Activated CD4-positive, alpha-beta T cell treated with anti-CD3 and anti-CD28 coated beads for 36 hours (primary cell): ENCODE measurements at regions of chr16 and their contacts with region 1.

Region 1: DNA sequence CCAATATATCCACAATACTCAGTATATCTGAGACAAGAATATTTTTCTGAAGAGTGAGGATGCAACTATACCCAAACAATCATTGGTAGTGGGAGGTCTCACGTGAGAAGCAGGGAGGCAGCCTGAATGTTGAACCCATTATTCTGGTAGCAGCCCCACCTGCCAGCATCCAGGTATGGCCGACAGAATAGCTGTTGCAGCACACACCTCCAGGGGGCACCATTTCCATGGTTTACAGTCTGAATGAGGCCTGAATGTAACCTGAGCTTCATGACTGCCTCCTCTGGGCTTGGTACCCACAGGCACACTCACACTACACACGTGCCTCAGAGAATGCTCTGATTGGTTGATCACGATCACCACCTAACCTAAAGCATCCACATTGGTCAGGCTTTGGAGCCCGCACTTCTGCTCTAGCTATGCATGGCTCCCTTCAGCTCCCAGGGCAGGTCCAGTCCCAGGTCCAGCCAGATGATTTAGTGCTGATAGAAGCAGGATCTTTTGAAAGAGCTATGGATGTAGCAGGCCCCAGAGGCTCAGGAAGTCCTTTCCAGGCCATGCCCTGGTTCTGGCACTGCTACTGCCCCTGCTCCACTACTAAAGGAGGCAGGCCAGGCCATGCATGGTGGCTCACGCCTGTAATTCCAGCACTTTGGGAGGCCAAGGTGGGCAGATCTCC is 11.0 kb upstream of the CBFB start:
- DNase-seq: peak; percentile 95
- ATAC-seq: peak; percentile 97
- H3K4me3 Mint-ChIP-seq: no peak overlapping the region
- H3K27ac Mint-ChIP-seq: no peak overlapping the region
- H3K4me1 Mint-ChIP-seq: peaks cover 17% of the 10 kb centered on the region
- H3K27me3 Mint-ChIP-seq: peaks cover 2% of the 10 kb centered on the region

Region 2: DNA sequence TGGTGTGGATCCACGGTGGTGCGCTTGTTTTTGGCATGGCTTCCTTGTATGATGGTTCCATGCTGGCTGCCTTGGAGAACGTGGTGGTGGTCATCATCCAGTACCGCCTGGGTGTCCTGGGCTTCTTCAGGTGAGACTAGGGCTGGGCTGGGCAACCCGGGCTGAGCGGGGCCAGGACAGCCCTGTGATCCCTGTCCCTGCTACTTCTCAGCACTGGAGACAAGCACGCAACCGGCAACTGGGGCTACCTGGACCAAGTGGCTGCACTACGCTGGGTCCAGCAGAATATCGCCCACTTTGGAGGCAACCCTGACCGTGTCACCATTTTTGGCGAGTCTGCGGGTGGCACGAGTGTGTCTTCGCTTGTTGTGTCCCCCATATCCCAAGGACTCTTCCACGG is 77.7 kb before region 1 on chr16:
- CTCF ChIA-PET with region 1: no interaction called
- POLR2A ChIA-PET with region 1: no interaction called
- intact Hi-C with region 1: no loop called
- DNase-seq: no peak
- ATAC-seq: no peak
- H3K4me3 Mint-ChIP-seq: no peak overlapping the region
- H3K27ac Mint-ChIP-seq: no peak overlapping the region
- H3K4me1 Mint-ChIP-seq: peaks cover 27% of the 10 kb centered on the region
- H3K27me3 Mint-ChIP-seq: no peaks in the 10 kb centered on the region

Region 3: DNA sequence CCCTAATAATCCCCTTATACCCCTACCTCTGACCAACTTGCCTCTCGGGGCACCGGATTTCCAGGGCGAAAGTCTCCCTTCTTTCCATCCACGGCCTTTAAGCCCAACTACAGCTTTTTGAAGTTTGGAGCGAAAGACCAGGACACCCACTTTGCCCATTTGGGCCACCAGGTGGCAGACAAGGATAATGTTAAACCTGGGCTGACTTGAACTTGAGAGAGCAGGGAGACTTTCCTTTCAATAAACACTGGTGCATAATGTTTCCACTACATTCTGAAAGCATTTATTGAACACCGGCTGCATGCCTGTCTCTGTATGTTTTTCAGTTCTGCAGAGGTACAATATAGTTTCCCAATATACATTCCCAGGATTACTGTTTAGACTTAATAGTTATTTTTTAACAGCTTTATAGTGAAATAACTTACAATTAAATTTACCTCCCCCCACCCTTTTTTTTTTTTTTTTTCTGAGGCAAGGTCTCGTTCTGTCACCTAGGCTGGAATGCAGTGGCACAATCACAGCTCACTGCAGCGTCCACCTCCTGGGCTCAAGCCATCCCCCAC is 63.8 kb before region 1 on chr16:
- CTCF ChIA-PET with region 1: interaction called, 14 read pairs
- POLR2A ChIA-PET with region 1: no interaction called
- intact Hi-C with region 1: loop called in 1 of 2 experiments (anchors 1 kb)
- DNase-seq: peak; percentile 87
- ATAC-seq: peak; percentile 85
- H3K4me3 Mint-ChIP-seq: no peak overlapping the region
- H3K27ac Mint-ChIP-seq: no peak overlapping the region
- H3K4me1 Mint-ChIP-seq: peaks cover 9% of the 10 kb centered on the region
- H3K27me3 Mint-ChIP-seq: peaks cover 28% of the 10 kb centered on the region

Region 4: DNA sequence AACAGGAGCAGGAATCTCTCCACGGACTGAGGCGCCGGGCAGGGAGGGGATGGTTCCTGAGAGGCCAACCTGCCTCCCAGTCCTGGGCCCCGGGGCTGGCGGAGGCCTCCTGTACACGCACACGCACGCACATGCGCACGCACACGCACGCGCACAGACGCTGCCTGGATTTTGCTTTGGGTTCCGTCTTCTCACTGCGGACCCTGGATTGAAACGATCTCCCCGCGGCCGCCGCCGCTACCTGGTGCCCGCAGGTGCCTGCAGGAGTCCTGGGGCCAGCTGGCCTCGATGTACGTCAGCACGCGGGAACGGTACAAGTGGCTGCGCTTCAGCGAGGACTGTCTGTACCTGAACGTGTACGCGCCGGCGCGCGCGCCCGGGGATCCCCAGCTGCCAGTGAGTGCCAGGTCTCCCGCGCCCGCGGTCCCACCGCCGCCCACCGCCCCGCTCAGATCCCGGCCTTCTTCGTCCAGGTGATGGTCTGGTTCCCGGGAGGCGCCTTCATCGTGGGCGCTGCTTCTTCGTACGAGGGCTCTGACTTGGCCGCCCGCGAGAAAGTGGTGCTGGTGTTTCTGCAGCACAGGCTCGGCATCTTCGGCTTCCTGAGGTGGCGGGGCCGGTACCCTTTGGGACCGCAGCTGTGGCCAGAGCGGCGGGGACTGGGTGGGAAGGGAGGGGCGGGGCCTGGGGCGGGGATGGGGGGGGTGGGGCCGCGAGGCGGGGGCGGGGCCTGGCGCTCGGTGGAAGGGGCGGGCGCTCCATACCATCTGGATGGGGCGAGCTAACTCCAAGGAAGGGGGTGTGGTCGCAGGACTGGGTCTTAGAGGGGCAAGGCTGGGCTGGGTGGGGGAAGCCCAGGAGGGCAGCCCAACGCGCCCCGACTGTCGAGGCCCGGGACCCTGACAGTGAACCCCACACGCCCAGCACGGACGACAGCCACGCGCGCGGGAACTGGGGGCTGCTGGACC is 17.3 kb before region 1 on chr16:
- CTCF ChIA-PET with region 1: interaction called, 5 read pairs
- POLR2A ChIA-PET with region 1: interaction called, 3 read pairs
- intact Hi-C with region 1: loop called in 1 of 2 experiments (anchors 1 kb)
- DNase-seq: peak; percentile 79
- ATAC-seq: peak; percentile 80
- H3K4me3 Mint-ChIP-seq: peak overlapping the region; percentile 74
- H3K27ac Mint-ChIP-seq: peak overlapping the region; percentile 87
- H3K4me1 Mint-ChIP-seq: peaks cover 15% of the 10 kb centered on the region
- H3K27me3 Mint-ChIP-seq: no peaks in the 10 kb centered on the region

Region 5: DNA sequence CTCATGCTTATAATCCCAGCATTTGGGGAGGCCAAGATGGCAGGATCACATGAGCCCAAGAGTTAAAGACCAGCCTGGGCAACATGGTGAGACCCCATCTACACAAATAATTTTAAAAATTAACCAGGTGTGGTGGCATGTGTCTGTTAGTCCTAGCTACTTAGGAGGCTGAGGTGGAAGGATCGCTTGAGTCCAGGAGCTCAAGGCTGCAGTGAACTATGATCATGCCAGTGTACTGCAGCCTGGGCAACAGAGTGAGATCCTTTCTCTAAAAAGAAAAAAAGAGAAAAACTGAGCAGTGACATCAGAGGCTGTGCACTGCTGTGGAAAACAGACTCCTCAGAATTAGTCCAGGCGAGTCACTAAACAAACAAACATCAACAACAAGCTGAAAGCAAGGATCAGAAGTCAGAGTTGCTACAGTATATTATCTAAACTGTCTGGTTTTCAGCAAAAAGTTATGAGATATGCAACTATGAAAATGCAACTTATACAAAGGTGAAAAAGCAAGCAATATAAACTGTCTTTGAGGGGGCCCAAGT is 50.3 kb after region 1 on chr16:
- CTCF ChIA-PET with region 1: interaction called, 12 read pairs
- POLR2A ChIA-PET with region 1: no interaction called
- intact Hi-C with region 1: no loop called
- DNase-seq: no peak
- ATAC-seq: no peak
- H3K4me3 Mint-ChIP-seq: no peak overlapping the region
- H3K27ac Mint-ChIP-seq: no peak overlapping the region
- H3K4me1 Mint-ChIP-seq: peaks cover 3% of the 10 kb centered on the region
- H3K27me3 Mint-ChIP-seq: no peaks in the 10 kb centered on the region

Region 6: GRCh38 chr16:67129422-67129821 is 111.5 kb after region 1 on chr16:
- CTCF ChIA-PET with region 1: interaction called, 10 read pairs
- POLR2A ChIA-PET with region 1: no interaction called
- intact Hi-C with region 1: no loop called
- DNase-seq: no peak
- ATAC-seq: no peak
- H3K4me3 Mint-ChIP-seq: no peak overlapping the region
- H3K27ac Mint-ChIP-seq: no peak overlapping the region
- H3K4me1 Mint-ChIP-seq: no peaks in the 10 kb centered on the region
- H3K27me3 Mint-ChIP-seq: no peaks in the 10 kb centered on the region

Region 7: DNA sequence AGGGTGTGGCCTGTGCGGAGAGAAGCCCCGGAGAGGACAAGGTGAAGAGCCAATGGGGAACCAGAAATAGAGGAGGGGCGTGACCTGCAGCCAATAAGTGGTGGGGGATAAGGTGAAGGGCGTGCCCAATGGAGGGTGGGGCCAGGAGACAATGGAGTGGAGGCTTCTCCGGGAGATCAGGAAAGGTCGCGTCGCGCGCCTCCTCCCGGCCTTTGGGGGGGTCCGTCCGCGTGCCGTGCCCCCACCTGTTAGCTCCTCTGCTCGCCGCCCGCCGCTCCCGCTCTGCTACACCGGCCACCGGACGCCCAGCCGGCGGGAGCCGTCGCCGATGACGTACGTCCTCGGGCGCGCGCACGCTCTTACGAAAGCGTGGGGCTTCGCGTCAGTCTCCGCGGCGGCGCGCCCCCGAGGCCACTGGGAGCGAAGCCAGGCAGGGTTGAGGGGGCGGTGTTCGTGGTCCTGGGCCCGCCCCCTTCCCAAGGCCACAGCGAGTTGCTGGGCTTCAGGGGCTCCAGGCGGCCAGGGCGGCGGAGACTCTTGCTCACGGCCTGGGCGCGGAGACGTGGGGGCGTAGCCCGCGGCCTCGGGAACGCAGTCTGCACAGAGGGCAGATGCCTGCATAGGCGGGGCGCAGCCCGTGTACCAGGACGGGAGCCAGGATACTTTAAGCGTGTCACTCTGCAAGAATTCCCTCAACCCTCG is 165.8 kb after region 1 on chr16 and contains the start of gene MATCAP1:
- CTCF ChIA-PET with region 1: interaction called, 18 read pairs
- POLR2A ChIA-PET with region 1: interaction called, 4 read pairs
- intact Hi-C with region 1: loop called in 1 of 2 experiments (anchors 1 kb)
- DNase-seq: peak; percentile 96
- ATAC-seq: peak; percentile 97
- H3K4me3 Mint-ChIP-seq: no peak within 1 kb of the TSS
- H3K27ac Mint-ChIP-seq: no peak within 1 kb of the TSS
- H3K4me1 Mint-ChIP-seq: peaks cover 15% of the 10 kb centered on the region
- H3K27me3 Mint-ChIP-seq: peaks cover 9% of the 10 kb centered on the region
- total RNA-seq, gene MATCAP1: 28.8 to 30.4 TPM

Region 8: DNA sequence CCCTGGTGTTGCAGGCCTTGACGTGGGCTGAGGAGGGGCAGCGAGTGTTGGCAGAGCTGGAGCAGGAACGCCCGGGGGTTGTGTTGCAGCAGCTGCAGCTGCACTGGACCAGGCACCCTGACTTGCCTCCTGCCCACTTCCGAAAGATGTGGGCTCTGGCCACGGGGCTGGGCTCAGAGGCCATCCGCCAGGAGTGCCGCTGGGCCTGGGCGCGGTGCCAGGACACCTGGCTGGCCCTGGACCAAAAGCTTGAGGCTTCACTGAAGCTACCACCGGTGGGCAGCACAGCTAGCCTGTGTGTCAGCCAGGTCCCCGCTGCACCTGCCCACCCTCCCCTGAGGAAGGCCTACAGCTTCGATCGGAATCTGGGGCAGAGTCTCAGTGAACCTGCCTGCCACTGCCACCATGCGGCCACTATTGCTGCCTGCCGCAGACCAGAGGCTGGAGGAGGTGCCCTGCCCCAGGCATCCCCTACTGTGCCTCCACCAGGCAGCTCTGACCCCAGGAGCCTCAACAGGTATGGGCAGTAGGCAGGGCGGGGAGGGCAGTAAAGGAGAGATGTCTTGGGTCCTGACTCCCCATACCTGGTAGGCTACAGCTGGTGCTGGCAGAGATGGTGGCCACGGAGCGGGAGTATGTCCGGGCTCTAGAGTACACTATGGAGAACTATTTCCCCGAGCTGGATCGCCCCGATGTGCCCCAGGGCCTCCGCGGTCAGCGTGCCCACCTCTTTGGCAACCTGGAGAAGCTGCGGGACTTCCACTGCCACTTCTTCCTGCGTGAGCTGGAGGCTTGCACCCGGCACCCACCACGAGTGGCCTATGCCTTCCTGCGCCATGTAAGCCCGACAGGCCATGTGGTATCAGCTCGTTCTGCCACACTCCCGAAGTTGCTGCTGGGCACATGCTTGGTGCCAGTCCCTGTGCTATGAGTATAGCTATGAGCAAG is 267.0 kb after region 1 on chr16:
- CTCF ChIA-PET with region 1: no interaction called
- POLR2A ChIA-PET with region 1: no interaction called
- intact Hi-C with region 1: no loop called
- DNase-seq: no peak
- ATAC-seq: no peak
- H3K4me3 Mint-ChIP-seq: no peak overlapping the region
- H3K27ac Mint-ChIP-seq: no peak overlapping the region
- H3K4me1 Mint-ChIP-seq: no peaks in the 10 kb centered on the region
- H3K27me3 Mint-ChIP-seq: no peaks in the 10 kb centered on the region

Region 9: DNA sequence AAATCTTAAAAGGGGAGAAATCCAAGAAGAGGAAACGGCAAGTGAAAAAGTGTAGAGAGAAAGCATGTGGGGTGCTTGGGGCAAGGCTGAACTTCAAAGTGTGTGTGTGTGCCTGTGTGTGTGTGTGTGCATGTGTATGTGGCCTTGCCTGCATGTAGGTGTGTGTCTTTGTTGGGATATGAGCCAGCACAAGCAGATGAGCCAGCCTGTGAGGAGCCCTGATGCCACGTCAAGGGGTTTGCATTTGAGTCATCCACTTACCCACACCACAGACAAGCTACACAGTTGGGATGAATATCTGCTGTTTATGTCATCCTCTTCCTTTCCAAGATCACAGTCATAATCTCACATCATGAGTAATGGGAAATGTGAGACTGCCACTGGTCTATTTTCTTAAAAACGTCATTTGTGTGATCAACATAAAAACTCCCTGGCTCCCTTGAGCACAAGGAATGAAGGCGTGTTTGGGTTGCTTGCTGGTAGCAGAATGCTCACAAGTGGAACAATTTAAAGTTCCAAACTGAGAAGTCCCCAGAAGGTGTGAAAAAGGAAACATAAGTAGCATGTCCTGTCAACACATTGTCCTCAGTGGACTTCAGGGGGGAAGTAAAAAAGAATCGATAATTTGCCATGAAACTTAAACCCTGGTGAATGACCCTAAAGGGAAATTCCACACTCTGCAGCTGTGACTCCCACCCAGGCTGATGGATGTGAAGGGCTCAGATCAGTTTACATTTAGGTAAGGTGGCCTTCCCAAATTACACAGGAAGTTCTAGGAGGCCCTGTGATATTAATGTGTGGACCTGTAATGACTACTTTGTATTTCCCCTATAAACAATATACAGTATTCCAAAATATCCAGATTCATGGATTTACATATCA is 293.9 kb after region 1 on chr16:
- CTCF ChIA-PET with region 1: no interaction called
- POLR2A ChIA-PET with region 1: no interaction called
- intact Hi-C with region 1: no loop called
- DNase-seq: peak; percentile 94
- ATAC-seq: peak; percentile 98
- H3K4me3 Mint-ChIP-seq: peak overlapping the region; percentile 1
- H3K27ac Mint-ChIP-seq: peak overlapping the region; percentile 98
- H3K4me1 Mint-ChIP-seq: peaks cover 40% of the 10 kb centered on the region
- H3K27me3 Mint-ChIP-seq: peaks cover 1% of the 10 kb centered on the region